Aorta (tissue), 5 donors: ENCODE measurements at regions of chr18 and their contacts with region 1.

Region 1: GRCh38 chr18:75874401-75875089 is 447.0 kb upstream of the SMIM21 start:
- DNase-seq: no peak
- ATAC-seq: no peak
- H3K4me3 ChIP-seq: no peak overlapping the region
- H3K27ac ChIP-seq: no peak overlapping the region
- H3K4me1 ChIP-seq: no peaks in the 10 kb centered on the region
- H3K27me3 ChIP-seq: no peaks in the 10 kb centered on the region

Region 2: DNA sequence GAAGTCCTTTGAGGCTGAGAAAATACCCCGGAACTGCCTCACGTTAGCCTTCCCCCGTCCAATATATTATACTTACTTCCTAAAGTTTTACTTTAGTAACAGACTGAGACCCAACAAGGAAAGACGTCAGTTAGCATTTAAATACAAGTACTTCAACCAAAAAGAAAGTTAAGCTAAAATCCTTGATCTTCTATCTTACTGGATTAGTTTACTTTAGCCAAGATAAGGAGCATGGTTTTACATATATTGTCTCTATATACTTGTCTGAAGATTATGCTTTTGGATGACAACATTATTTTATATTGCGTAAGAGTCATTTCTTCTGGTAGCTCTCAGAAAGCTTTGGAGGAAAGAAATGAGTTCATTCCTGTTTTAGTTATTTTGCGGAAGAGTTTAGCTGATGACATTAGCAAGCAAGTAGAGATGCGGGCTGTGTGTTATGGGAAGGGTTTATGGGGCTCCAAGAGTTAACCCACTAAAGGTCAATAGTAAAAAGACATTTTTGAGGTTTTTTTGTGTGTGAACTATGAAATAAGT is 87.6 kb after region 1 on chr18:
- intact Hi-C with region 1: loop called in 1 of 2 experiments (anchors 10 kb)
- DNase-seq: no peak
- ATAC-seq: no peak
- H3K4me3 ChIP-seq: no peak overlapping the region
- H3K27ac ChIP-seq: no peak overlapping the region
- H3K4me1 ChIP-seq: no peaks in the 10 kb centered on the region
- H3K27me3 ChIP-seq: no peaks in the 10 kb centered on the region

Region 3: DNA sequence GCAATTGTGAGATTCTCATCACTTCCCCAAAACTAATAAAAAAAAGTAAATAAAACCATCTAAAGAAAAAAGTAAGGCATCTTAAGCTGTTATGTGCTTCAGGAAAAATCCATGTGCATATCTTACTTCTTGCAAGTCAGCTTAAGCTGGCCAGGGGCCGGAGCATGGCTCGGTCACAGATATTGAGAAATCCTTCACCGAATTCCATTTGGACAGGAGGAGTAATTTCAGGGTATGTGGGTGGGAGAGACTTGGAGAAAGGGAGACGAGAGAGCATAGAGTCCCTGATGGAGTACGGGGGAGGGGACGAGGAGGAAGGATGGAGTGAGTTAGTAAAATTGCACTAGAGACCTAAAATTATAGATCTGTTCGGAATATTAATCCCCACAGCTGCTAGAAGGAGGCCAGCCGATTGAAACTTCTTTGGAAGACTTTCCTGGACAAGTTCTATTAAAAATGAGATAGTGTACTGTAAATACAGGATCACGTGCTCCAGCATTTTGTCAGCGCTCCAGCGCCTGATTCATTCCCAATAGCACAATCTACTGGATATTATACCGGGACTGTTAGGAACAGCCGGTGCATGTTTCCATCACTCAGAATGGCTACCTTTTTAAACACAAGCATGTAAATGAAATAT is 182.0 kb after region 1 on chr18:
- intact Hi-C with region 1: no loop called
- DNase-seq: peak in 1 of 2 donors; percentile 55
- ATAC-seq: peak; percentile 62
- H3K4me3 ChIP-seq: no peak overlapping the region
- H3K27ac ChIP-seq: no peak overlapping the region
- H3K4me1 ChIP-seq: no peaks in the 10 kb centered on the region
- H3K27me3 ChIP-seq: no peaks in the 10 kb centered on the region

Region 4: GRCh38 chr18:76349067-76349715 is 474.6 kb after region 1 on chr18:
- intact Hi-C with region 1: loop called in 1 of 2 experiments (anchors 10 kb)
- DNase-seq: no peak
- ATAC-seq: peak; percentile 67
- H3K4me3 ChIP-seq: no peak overlapping the region
- H3K27ac ChIP-seq: no peak overlapping the region
- H3K4me1 ChIP-seq: no peaks in the 10 kb centered on the region
- H3K27me3 ChIP-seq: no peaks in the 10 kb centered on the region